ENCODE measurements at regions of chr12 and their contacts with region 1.

Region 1: DNA sequence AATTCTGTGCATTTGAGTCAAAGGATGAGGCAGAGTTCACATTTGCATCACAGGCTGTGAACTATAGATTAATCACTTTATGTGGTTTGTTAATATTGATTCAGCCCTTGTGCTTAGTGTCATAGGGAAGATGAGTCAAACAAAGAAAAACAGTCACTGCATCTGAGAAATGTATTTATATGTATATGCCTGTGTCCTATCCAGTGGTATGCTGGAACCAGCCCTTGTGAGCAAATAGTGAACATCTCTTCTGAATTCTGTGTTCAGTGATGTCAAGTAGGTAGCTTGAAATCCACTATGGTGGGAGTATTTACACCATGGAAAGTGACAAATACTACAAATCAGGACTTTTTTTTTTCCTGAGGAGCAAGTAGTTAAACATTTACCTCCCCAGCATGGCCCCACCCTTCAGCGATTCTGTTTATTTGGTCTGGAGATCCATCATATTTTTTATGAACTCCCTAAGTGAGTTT is 128.5 kb downstream of the HMGA2 start:
- DNase-seq: no peak
- H3K4me3 ChIP-seq: no peak overlapping the region
- H3K27ac ChIP-seq: no peak overlapping the region
- H3K4me1 ChIP-seq: peaks cover 11 to 14% (median 12%) of the 10 kb centered on the region in 4 donors
- H3K27me3 ChIP-seq: peaks cover 0 to 3% (median 0%) of the 10 kb centered on the region in 4 donors
- CTCF ChIP-seq: no peak
- EP300 ChIP-seq: no peak
- POLR2A ChIP-seq: no peak

Region 2: GRCh38 chr12:65830305-65830704 is 122.5 kb before region 1 on chr12:
- intact Hi-C with region 1: loop called (anchors 10 kb)
- DNase-seq: no peak
- H3K4me3 ChIP-seq: no peak overlapping the region
- H3K27ac ChIP-seq: no peak overlapping the region
- H3K4me1 ChIP-seq: peaks cover 8 to 15% (median 11%) of the 10 kb centered on the region in 4 donors
- H3K27me3 ChIP-seq: peaks cover 0 to 35% (median 17%) of the 10 kb centered on the region in 4 donors
- CTCF ChIP-seq: no peak
- EP300 ChIP-seq: no peak
- POLR2A ChIP-seq: no peak

Region 3: DNA sequence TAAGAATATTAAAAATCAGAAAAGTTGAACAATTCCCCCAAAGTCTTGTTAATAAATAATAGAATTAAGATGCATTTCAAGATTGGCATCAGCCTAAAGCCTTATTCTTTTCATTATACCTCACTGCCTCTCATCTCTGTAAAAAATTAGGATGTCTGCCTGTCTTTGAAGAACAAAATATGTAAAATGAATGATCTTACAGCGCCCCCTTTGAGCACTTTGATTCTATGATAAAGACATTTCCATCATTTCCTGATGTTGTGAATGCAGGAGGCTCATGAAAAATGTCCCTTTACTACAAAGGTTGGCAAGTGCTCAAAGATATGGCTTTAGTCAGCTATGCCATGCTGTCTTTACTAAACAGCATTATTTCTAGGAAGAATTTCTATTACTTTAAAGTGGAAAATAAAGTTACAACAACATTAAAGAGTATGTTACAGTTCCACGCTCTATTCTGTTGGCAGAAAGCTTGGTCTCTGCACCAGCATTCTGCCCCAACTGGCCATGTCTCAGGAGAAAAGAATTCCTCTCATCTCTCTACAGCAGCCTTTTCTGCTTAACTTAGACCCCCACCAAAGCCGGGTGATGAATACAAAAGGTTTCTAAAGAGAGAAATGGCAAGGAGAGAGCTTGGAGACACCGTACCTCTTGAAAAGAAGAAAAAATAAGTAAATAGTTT is 82.7 kb after region 1 on chr12:
- intact Hi-C with region 1: no loop called
- DNase-seq: no peak
- H3K4me3 ChIP-seq: no peak overlapping the region
- H3K27ac ChIP-seq: peak overlapping the region in 2 of 4 donors; percentile 8 to 54
- H3K4me1 ChIP-seq: peaks cover 4 to 16% (median 14%) of the 10 kb centered on the region in 4 donors
- H3K27me3 ChIP-seq: no peaks in the 10 kb centered on the region
- CTCF ChIP-seq: peak in 1 of 3 experiments; percentile 26
- EP300 ChIP-seq: no peak
- POLR2A ChIP-seq: no peak